ENCODE measurements at regions of chr1 and their contacts with region 1.

Region 1: GRCh38 chr1:29557701-29558445 is 321.6 kb downstream of the PTPRU start:
- DNase-seq: no peak
- ATAC-seq: no peak
- H3K4me3 ChIP-seq: no peak overlapping the region
- H3K27ac ChIP-seq: no peak overlapping the region
- H3K4me1 ChIP-seq: no peaks in the 10 kb centered on the region
- H3K27me3 ChIP-seq: no peaks in the 10 kb centered on the region
- CTCF ChIP-seq: no peak

Region 2: DNA sequence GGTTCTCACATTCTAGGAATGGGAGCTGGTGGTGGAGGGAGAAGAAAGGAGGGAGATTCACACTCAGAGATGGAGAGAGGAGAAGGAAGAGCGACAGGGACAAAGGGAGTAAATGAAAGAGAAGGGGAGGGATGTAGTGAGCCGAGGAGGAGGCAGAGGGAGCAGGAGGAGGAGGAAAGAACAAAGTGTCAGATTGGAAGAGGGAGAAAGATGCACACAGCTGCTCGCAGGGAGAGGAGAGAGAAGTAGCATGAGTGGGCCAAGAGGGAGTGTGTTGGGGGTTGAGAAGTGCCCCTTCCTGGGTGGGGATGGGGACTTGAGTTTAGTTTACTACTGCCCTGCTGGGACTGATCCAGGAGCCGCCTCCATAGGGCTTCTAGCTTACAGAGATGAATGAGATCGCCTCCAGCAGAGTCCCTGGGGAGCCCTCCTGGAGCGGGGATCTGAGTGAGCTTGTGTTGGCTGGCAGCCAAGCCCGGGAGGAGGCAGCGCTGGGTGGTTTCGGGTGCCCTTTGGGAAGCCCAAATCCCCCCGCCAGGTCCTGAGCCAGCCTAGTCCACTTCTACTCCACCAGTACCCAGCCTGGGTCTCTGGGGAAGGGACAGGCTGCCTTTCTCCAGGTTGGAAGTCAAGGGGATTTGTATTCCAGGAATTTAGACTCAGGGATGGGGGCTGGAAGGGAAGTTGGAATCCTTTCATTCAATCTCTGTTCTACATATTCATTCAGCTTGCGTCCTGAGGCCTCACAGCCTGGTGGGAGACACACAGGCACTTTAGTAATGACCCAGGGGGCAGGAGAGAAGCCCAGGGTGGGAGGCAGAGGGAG is 300.7 kb before region 1 on chr1:
- CTCF ChIA-PET with region 1: no interaction called
- POLR2A ChIA-PET with region 1: interaction called, 11 read pairs
- in situ Hi-C with region 1: no loop called
- intact Hi-C with region 1: no loop called
- DNase-seq: no peak
- ATAC-seq: no peak
- H3K4me3 ChIP-seq: no peak overlapping the region
- H3K27ac ChIP-seq: no peak overlapping the region
- H3K4me1 ChIP-seq: no peaks in the 10 kb centered on the region
- H3K27me3 ChIP-seq: no peaks in the 10 kb centered on the region
- CTCF ChIP-seq: no peak

Region 3: GRCh38 chr1:29569971-29570634 is 12.2 kb after region 1 on chr1:
- CTCF ChIA-PET with region 1: no interaction called
- POLR2A ChIA-PET with region 1: no interaction called
- in situ Hi-C with region 1: no loop called
- intact Hi-C with region 1: no loop called
- DNase-seq: peak; percentile 98
- ATAC-seq: peak; percentile 98
- H3K4me3 ChIP-seq: no peak overlapping the region
- H3K27ac ChIP-seq: no peak overlapping the region
- H3K4me1 ChIP-seq: no peaks in the 10 kb centered on the region; the same call in none of the 2 replicates
- H3K27me3 ChIP-seq: no peaks in the 10 kb centered on the region
- CTCF ChIP-seq: no peak

Region 4: GRCh38 chr1:30895944-30896660 is 1338.2 kb after region 1 on chr1:
- CTCF ChIA-PET with region 1: no interaction called
- POLR2A ChIA-PET with region 1: no interaction called
- in situ Hi-C with region 1: no loop called
- intact Hi-C with region 1: no loop called
- DNase-seq: no peak
- ATAC-seq: no peak
- H3K4me3 ChIP-seq: no peak overlapping the region
- H3K27ac ChIP-seq: peak overlapping the region; percentile 18; the same call in 1 of the 2 replicates
- H3K4me1 ChIP-seq: no peaks in the 10 kb centered on the region
- H3K27me3 ChIP-seq: no peaks in the 10 kb centered on the region
- CTCF ChIP-seq: no peak